ENCODE measurements at regions of chr9 and their contacts with region 1.

Region 1: GRCh38 chr9:120742951-120743416 is 28.7 kb upstream of the MEGF9 start:
- DNase-seq: peak; percentile 12
- H3K4me3 Mint-ChIP-seq: no peak overlapping the region
- H3K27ac Mint-ChIP-seq: no peak overlapping the region
- H3K4me1 Mint-ChIP-seq: peaks cover 5% of the 10 kb centered on the region
- H3K27me3 Mint-ChIP-seq: no peaks in the 10 kb centered on the region

Region 2: DNA sequence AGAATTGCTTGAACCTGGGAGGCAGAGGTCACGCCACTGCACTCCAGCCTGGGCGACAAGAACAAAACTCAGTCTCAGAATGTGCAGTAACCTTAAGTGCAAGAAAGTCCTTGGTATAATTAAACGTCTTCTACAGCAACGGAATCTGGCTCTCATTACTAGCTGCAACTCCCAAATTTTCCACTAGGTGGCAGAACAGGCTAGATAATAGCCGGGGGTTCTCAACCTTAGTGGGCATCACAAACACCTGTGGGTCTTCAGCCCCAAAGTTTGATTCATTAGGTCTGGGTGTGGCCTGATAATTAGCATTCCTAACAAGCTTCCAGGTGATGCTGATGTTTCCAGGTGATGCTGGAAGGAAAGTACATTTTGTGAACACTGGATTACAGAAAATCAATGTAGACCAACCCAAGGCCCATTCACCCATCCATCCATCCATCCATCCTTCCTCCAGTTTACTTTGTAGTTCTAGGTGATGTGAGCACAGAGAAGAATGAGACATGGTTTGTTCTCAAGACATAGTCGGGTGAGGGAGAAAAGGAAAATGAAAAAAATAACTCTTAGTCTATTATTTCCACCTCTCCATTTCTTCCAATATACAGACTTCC is 12.9 kb after region 1 on chr9:
- CTCF ChIA-PET with region 1: interaction called, 10 read pairs
- POLR2A ChIA-PET with region 1: no interaction called
- DNase-seq: peak; percentile 76
- H3K4me3 Mint-ChIP-seq: no peak overlapping the region
- H3K27ac Mint-ChIP-seq: no peak overlapping the region
- H3K4me1 Mint-ChIP-seq: peaks cover 4% of the 10 kb centered on the region
- H3K27me3 Mint-ChIP-seq: no peaks in the 10 kb centered on the region